Activated CD8-positive, alpha-beta T cell treated with anti-CD3 and anti-CD28 coated beads, Interleukin-2, amount 10 ng/mL, durations not matched to agents 7 days and 5 days (primary cell): ENCODE measurements at regions of chr11 and their contacts with region 1.

Region 1: DNA sequence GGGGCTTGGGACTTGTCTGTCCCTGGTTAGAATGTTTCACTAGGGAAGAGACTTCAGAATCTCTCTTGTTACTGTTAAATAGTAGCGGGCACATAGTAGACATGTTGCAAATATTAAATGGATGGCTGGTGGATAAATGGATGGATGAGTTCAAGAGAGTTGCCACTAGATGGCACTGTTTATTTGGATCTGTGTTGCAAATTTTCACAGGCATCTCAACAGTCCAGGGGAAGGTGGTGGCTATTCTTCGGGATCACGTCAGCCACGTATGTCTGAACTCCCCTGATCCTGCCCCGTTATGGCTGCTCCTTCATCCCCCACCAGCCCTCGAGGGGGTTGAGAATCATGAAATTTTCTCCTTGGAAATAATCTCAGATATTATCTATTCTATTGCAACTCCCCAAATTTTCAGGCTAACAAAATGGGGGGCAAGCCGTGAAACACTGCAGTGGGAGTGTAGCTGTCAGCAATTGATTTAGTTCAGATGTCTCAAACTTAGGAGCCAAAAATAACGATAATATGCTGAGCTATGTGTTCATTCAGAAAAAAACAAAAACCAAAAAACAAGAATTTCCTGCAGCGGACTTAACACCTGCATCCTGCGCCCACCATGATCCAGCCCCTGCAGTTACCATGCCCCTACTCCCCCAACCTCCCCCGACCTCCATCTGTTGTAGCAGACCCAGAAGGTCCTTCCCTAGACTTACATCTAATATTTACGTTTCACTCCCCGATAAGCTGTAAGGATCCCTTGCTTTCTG is 29.1 kb upstream of the BIRC3 start:
- DNase-seq: peak; percentile 58
- ATAC-seq: peak; percentile 92
- H3K4me3 Mint-ChIP-seq: peak overlapping the region; percentile 31
- H3K27ac Mint-ChIP-seq: no peak overlapping the region
- H3K4me1 Mint-ChIP-seq: peaks cover 22% of the 10 kb centered on the region
- H3K27me3 Mint-ChIP-seq: no peaks in the 10 kb centered on the region

Region 2: DNA sequence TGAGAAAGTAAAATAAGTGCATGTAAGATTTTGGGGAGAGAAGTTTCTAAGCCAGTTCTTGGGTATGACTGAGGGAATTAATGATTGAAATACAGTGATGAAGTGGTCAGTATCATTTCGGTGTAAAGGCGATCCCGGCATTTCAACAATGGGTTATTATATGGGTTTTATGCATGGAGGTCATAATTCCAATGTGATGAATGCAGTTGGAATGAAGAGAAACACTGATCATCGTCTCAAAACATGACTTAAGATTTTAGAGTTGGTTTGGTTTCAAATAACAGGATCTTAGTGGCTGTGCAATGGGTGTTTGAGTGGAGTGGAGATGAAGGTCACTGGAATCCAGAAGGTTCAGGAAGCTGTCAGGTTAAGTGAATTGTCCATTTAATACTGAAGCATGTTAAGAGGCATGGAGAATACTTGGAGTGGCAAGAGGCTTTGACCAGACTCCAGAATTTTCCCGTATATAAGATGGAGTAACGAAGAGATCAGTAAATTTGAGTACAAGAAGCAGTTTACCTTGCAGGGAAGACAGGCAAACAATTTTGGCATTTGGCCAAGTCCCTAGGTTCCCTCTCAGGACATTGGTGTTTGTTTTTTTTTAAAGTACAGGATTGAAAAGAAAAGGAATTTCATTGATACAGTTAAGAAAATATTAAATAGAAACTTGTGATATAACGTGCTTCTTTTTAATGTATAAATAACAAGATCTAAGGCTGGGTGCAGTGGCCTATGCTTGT is 67.2 kb before region 1 on chr11:
- CTCF ChIA-PET with region 1: no interaction called
- POLR2A ChIA-PET with region 1: no interaction called
- DNase-seq: no peak
- ATAC-seq: no peak
- H3K4me3 Mint-ChIP-seq: no peak overlapping the region
- H3K27ac Mint-ChIP-seq: no peak overlapping the region
- H3K4me1 Mint-ChIP-seq: no peaks in the 10 kb centered on the region
- H3K27me3 Mint-ChIP-seq: peaks cover 2% of the 10 kb centered on the region

Region 3: DNA sequence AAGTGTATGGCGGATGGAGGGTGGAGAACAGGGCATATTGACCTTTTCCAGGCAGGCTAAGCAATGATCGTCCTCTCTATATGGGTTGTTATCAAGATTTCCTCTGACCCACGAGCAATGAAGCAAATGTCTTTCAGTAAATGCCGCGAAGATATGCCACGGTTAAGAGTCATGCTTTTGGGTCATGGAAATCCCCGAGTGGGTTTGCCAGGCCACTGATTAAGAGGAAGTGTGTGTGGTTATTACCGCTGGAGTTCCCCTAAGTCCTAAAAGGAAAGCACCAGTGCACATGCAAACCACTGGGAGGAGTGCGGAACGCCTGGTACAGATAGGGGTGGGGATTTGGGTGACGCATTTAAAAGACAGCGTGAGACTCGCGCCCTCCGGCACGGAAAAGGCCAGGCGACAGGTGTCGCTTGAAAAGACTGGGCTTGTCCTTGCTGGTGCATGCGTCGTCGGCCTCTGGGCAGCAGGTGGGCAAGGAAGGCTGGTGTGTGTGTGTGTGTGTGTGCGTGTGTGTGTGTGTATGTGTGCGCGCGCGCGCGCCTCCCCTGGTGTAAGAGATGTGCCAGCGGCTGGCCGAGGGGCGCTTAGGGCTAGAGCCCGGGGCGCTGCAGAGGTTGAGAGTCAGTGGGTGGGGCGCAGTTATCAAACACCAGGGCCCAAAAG is 29.1 kb after region 1 on chr11 and contains the start of gene BIRC3:
- CTCF ChIA-PET with region 1: interaction called, 484 read pairs
- POLR2A ChIA-PET with region 1: interaction called, 23 read pairs
- DNase-seq: peak; percentile 92
- ATAC-seq: peak; percentile 90
- H3K4me3 Mint-ChIP-seq: peak within 1 kb of the TSS; percentile 89
- H3K27ac Mint-ChIP-seq: peak within 1 kb of the TSS; percentile 94
- H3K4me1 Mint-ChIP-seq: peaks cover 66% of the 10 kb centered on the region
- H3K27me3 Mint-ChIP-seq: no peaks in the 10 kb centered on the region
- total RNA-seq, gene BIRC3: 12.9 to 14.5 TPM

Region 4: GRCh38 chr11:102332611-102332994 is 44.5 kb after region 1 on chr11:
- CTCF ChIA-PET with region 1: interaction called, 22 read pairs
- POLR2A ChIA-PET with region 1: no interaction called
- DNase-seq: no peak
- ATAC-seq: no peak
- H3K4me3 Mint-ChIP-seq: no peak overlapping the region
- H3K27ac Mint-ChIP-seq: peak overlapping the region; percentile 11
- H3K4me1 Mint-ChIP-seq: peaks cover 3% of the 10 kb centered on the region
- H3K27me3 Mint-ChIP-seq: no peaks in the 10 kb centered on the region

Region 5: GRCh38 chr11:102367364-102367763 is 79.2 kb after region 1 on chr11:
- CTCF ChIA-PET with region 1: interaction called, 22 read pairs
- POLR2A ChIA-PET with region 1: no interaction called
- DNase-seq: no peak
- ATAC-seq: peak; percentile 64
- H3K4me3 Mint-ChIP-seq: no peak overlapping the region
- H3K27ac Mint-ChIP-seq: peak overlapping the region; percentile 37
- H3K4me1 Mint-ChIP-seq: peaks cover 29% of the 10 kb centered on the region
- H3K27me3 Mint-ChIP-seq: no peaks in the 10 kb centered on the region

Region 6: GRCh38 chr11:102495161-102496042 is 207.3 kb after region 1 on chr11:
- CTCF ChIA-PET with region 1: interaction called, 19 read pairs
- POLR2A ChIA-PET with region 1: interaction called, 3 read pairs
- DNase-seq: peak; percentile 68
- ATAC-seq: peak; percentile 78
- H3K4me3 Mint-ChIP-seq: no peak overlapping the region
- H3K27ac Mint-ChIP-seq: peak overlapping the region; percentile 9
- H3K4me1 Mint-ChIP-seq: peaks cover 27% of the 10 kb centered on the region
- H3K27me3 Mint-ChIP-seq: peaks cover 14% of the 10 kb centered on the region